ENCODE measurements at regions of chr2 and their contacts with region 1.

Region 1: DNA sequence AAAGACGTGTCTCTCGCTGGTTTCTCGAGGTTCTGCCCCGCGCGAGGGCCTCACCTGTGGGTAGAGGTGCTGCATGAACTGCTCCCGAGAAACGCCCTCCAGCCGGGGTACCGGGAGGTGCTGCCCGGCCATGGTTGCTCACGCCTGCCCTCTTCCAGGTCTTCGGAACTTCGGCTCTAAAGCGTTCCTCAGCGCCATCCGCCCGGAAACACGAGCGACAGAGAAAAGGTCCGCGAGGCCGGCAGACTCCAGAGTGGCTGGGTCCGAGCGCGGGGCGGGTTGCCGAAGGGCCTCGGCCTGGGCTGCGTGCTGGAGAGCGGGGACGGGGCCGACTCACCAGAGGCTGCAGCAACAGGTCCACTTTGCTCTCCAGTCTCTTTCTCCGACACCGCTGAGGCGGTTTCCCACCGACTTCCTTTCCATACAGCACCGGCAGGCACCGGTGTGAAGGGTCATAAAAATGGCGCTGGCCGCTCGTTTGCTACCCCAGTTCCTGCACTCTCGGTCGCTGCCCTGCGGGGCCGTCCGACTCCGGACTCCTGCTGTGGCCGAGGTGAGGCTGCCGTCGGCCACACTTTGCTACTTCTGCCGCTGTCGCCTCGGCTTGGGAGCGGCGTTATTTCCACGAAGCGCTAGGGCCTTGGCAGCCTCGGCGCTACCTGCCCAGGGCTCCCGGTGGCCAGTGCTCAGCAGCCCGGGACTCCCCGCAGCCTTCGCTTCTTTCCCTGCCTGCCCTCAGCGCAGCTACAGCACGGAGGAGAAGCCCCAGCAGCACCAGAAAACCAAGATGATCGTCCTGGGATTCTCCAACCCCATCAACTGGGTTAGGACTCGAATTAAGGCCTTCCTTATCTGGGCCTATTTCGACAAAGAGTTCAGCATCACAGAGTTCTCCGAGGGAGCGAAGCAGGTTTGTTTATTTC is at the starts of genes MAIP1 and TYW5:
- DNase-seq: peak; percentile 64 to 76
- H3K4me3 ChIP-seq: peak within 1 kb of the TSS; percentile 94 to 99 (median 96)
- H3K27ac ChIP-seq: peak within 1 kb of the TSS; percentile 85 to 95
- H3K4me1 ChIP-seq: peaks cover 0 to 18% of the 10 kb centered on the region in 2 donors
- H3K27me3 ChIP-seq: no peaks in the 10 kb centered on the region
- CTCF ChIP-seq: peak in 2 of 3 donors; percentile 24 to 35
- POLR2A ChIP-seq: no peak
- total RNA-seq, gene MAIP1: 17.0 to 27.4 (median 26.6) TPM
- total RNA-seq, gene TYW5: 7.2 to 12.9 (median 9.8) TPM

Region 2: DNA sequence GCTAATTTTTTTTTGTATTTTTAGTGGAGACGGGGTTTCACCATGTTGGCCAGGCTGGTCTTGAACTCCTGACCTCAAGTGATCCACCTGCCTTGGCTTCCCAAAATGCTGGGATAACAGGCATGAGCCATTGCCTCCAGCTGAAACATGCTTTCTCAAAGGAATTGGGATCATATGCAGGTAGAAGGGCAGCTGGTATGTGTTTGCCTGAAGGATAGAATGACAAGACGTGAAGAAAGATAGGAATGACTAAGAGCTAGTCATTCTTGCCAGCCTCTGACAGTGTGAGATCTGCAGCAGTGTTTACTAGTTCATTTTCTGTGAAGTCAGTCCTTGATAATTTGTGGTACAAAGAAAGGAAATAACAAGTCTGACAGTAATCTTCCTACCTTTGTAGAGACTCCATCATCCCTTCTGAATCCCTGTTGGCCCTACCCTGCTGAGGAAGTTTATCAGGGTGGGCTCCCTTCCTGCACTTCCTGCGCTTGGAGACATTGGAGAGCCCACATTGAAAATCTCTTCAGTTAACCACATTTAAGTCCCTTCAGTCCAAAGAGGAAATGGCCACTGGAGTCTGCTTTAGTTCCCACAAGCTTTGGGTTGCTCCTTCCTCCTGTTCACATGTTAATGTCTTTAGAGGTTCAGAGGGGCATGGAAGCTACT is 1175.1 kb after region 1 on chr2:
- intact Hi-C with region 1: loop called (anchors 5 kb)
- DNase-seq: no peak
- H3K4me3 ChIP-seq: no peak overlapping the region
- H3K27ac ChIP-seq: peak overlapping the region; percentile 65 to 68
- H3K4me1 ChIP-seq: peaks cover 6 to 50% of the 10 kb centered on the region in 2 donors
- H3K27me3 ChIP-seq: no peaks in the 10 kb centered on the region
- CTCF ChIP-seq: no peak
- POLR2A ChIP-seq: no peak